AG04450 (cell line): ENCODE measurements at regions of chr5 and their contacts with region 1.

Region 1: GRCh38 chr5:52948418-52949076 is 40.6 kb upstream of the ITGA2 start:
- DNase-seq: peak; percentile 69
- H3K4me3 ChIP-seq: no peak overlapping the region
- H3K27ac ChIP-seq: no peak overlapping the region
- H3K27me3 ChIP-seq: no peaks in the 10 kb centered on the region
- CTCF ChIP-seq: peak; percentile 75

Region 2: DNA sequence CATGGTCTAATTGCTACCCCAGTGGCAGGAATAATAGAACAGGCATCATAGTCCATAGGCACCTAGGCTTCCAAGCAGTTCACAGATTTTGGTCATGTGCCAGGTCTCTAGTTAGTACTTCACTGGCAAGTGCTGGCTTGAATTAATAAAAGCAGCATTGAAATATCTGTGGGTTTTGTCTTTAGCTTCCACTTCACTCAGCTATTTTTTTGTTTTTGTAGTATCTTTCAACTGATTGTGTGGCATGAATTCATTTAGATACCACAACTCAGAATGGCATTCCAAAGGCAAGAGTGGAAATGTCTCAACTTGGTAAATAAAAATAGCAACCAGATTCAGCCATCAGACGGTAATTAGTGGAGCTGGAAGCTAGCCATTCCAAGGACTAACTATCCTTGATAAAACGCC is 12.7 kb after region 1 on chr5:
- CTCF ChIA-PET with region 1: interaction called, 25 read pairs
- POLR2A ChIA-PET with region 1: no interaction called
- DNase-seq: no peak
- H3K4me3 ChIP-seq: no peak overlapping the region
- H3K27ac ChIP-seq: no peak overlapping the region
- H3K27me3 ChIP-seq: no peaks in the 10 kb centered on the region
- CTCF ChIP-seq: no peak

Region 3: GRCh38 chr5:53031695-53032096 is 83.1 kb after region 1 on chr5:
- CTCF ChIA-PET with region 1: interaction called, 14 read pairs
- POLR2A ChIA-PET with region 1: no interaction called
- DNase-seq: peak; percentile 86
- H3K4me3 ChIP-seq: no peak overlapping the region
- H3K27ac ChIP-seq: peak overlapping the region; percentile 89
- H3K27me3 ChIP-seq: no peaks in the 10 kb centered on the region
- CTCF ChIP-seq: no peak

Region 4: DNA sequence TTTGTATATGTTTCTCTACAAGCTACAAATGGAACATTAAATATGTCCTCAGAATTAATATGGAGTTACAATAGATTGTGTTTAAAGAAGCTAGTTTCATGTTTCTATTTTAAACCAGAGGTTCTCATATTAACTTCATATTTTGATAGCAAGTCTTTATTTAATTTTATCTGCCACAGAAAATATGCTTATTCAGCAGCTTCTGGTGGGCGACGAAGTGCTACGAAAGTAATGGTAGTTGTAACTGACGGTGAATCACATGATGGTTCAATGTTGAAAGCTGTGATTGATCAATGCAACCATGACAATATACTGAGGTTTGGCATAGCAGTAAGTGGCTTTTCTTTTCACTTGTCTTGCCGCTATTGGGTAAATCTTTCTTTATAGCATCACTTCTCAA is 106.8 kb after region 1 on chr5:
- CTCF ChIA-PET with region 1: interaction called, 20 read pairs
- POLR2A ChIA-PET with region 1: no interaction called
- DNase-seq: no peak
- H3K4me3 ChIP-seq: no peak overlapping the region
- H3K27ac ChIP-seq: no peak overlapping the region
- H3K27me3 ChIP-seq: no peaks in the 10 kb centered on the region
- CTCF ChIP-seq: no peak

Region 5: GRCh38 chr5:53089345-53089991 is 140.9 kb after region 1 on chr5:
- CTCF ChIA-PET with region 1: interaction called, 148 read pairs
- POLR2A ChIA-PET with region 1: no interaction called
- DNase-seq: no peak
- H3K4me3 ChIP-seq: no peak overlapping the region
- H3K27ac ChIP-seq: no peak overlapping the region
- H3K27me3 ChIP-seq: no peaks in the 10 kb centered on the region
- CTCF ChIP-seq: no peak

Region 6: GRCh38 chr5:53114988-53115387 is 166.4 kb after region 1 on chr5:
- CTCF ChIA-PET with region 1: interaction called, 16 read pairs
- POLR2A ChIA-PET with region 1: no interaction called
- DNase-seq: no peak
- H3K4me3 ChIP-seq: no peak overlapping the region
- H3K27ac ChIP-seq: no peak overlapping the region
- H3K27me3 ChIP-seq: no peaks in the 10 kb centered on the region
- CTCF ChIP-seq: peak; percentile 50

Region 7: GRCh38 chr5:53631251-53631650 is 682.7 kb after region 1 on chr5:
- CTCF ChIA-PET with region 1: no interaction called
- POLR2A ChIA-PET with region 1: no interaction called
- DNase-seq: no peak
- H3K4me3 ChIP-seq: no peak overlapping the region
- H3K27ac ChIP-seq: no peak overlapping the region
- H3K27me3 ChIP-seq: no peaks in the 10 kb centered on the region
- CTCF ChIP-seq: no peak